ENCODE measurements at regions of chr19 and their contacts with region 1.

Region 1: GRCh38 chr19:3801412-3802096 is 15.4 kb upstream of the MATK start:
- DNase-seq: peak; percentile 64 to 80
- ATAC-seq: peak; percentile 70 to 72 (median 70)
- H3K4me3 ChIP-seq: peak overlapping the region; percentile 10
- H3K4me3 Mint-ChIP-seq: peak overlapping the region; percentile 78
- H3K27ac ChIP-seq: peak overlapping the region; percentile 34
- H3K27ac Mint-ChIP-seq: peak overlapping the region; percentile 68 to 72
- H3K4me1 ChIP-seq: peaks cover 91% of the 10 kb centered on the region
- H3K4me1 Mint-ChIP-seq: peaks cover 34 to 70% of the 10 kb centered on the region in 2 donors
- H3K27me3 ChIP-seq: no peaks in the 10 kb centered on the region
- H3K27me3 Mint-ChIP-seq: no peaks in the 10 kb centered on the region
- CTCF ChIP-seq: no peak

Region 2: DNA sequence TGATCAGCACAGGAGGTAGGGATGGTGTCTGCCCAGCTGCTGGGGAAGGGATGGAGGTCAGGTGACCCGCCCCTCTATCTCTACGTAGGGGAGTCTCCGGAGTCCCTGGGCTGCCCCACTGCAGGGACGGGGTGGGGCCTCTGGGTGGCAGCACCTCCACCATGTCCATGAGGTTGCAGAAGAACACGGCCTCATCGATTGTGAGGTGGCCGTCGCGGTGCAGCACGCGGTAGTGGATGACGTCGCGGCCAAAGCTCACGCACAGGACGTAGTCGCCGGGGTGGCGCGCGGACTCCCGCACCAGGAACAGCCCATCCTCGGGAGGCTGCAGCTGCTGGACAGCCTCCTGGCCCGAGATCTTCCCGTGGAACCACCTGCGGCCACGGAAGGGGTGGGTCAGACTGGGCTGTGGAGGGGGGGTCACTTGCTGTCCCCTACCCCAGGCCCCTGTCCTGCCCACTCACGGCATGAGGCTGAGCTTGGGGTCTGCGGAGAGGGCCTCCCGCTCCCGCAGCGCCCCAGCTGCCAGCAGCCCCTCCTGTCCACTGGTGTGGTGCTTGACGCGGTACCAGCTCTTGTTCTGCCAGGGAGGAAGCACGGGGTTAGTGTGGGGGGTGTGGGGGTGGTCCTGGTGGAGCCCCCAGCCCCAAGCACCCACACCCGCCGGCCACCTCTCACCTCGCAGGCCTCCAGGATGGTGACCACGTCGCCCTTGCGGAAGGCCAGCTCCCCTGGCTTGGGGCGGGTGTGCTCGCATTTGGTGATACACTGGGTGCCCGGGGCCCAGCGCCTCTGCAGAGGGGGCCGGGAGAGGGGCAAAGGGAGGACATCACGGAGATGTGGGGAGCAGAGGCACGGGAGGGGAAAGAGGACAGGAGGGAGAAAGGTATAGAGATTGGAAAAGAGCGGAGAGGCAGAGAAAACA is 17.6 kb before region 1 on chr19:
- intact Hi-C with region 1: loop called (anchors 1 kb)
- DNase-seq: peak; percentile 67 to 70
- ATAC-seq: peak; percentile 66 to 71 (median 70)
- H3K4me3 ChIP-seq: peak overlapping the region; percentile 90
- H3K4me3 Mint-ChIP-seq: peak overlapping the region; percentile 90
- H3K27ac ChIP-seq: peak overlapping the region; percentile 73
- H3K27ac Mint-ChIP-seq: peak overlapping the region; percentile 83 to 93
- H3K4me1 ChIP-seq: peaks cover 61% of the 10 kb centered on the region
- H3K4me1 Mint-ChIP-seq: peaks cover 22 to 44% of the 10 kb centered on the region in 2 donors
- H3K27me3 ChIP-seq: no peaks in the 10 kb centered on the region
- H3K27me3 Mint-ChIP-seq: no peaks in the 10 kb centered on the region
- CTCF ChIP-seq: peak; percentile 72

Region 3: DNA sequence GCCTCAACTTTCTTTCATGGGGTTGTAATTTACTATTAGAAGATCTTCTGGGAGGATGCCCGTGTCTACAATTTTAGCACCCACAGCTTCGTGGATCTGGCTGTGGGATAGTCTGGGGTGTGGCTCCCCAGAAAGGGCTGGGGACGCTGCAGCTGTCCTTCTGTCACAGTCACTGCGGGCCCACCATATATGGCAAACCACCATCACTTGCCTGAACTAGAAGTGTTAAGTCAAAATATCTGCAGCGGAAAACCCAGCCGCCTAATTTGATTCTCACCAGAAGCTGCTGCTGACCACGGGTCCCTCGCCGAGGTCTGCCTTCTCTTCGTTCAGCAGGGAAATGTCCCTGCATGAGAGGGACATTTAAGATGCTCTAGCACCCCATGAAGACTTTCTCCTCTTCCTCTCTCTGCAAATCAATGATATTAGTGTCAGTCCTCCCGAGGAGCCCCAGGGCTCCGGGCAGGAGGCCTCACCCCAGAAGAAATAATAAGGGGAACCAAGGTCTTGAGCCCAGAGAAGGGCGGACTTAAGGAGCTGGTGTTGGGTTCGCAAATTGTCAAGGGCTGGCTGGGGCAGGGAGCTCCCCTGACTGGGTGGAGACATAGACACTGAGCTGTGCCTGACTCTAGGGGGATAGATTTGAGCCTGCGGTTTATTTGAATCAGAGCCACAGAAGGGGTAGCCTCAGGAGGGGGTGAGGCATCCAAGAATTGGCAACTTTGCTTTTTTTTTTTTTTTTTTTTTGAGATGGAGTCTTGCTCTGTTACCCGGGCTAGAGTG is 12.4 kb before region 1 on chr19:
- intact Hi-C with region 1: loop called (anchors 1 kb)
- DNase-seq: peak; percentile 70 to 77
- ATAC-seq: peak; percentile 67 to 82 (median 77)
- H3K4me3 ChIP-seq: peak overlapping the region; percentile 15
- H3K4me3 Mint-ChIP-seq: peak overlapping the region; percentile 88
- H3K27ac ChIP-seq: peak overlapping the region; percentile 84
- H3K27ac Mint-ChIP-seq: peak overlapping the region; percentile 92 to 96
- H3K4me1 ChIP-seq: peaks cover 80% of the 10 kb centered on the region
- H3K4me1 Mint-ChIP-seq: peaks cover 41 to 57% of the 10 kb centered on the region in 2 donors
- H3K27me3 ChIP-seq: no peaks in the 10 kb centered on the region
- H3K27me3 Mint-ChIP-seq: no peaks in the 10 kb centered on the region
- CTCF ChIP-seq: no peak

Region 4: DNA sequence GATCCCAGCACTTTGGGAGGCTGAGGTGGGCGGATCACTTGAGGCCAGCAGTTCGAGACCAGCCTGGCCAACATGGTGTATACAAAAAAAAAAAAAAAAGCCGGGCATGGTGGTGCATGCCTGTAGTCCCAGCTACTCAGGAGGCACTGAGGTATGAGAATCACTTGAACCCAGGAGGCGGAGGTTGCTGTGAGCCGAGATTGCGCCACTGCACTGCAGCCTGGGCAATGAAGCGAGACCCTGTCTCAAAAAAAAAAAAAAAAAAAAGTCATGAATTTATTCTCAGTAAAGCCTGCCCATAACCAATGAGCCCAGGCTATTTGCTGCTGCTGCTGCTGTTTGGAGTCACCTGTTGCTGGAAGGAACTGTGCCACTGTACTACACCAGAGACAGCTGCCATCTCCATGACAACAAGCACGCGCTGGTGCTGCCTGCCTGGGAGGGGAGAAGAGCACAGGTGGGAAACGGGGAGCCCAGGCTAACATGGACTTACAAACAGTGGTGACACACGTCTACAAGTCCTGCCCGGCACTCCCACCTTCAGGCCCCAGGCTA is 56.0 kb after region 1 on chr19:
- intact Hi-C with region 1: no loop called
- DNase-seq: no peak
- ATAC-seq: no peak
- H3K4me3 ChIP-seq: no peak overlapping the region
- H3K4me3 Mint-ChIP-seq: no peak overlapping the region
- H3K27ac ChIP-seq: no peak overlapping the region
- H3K27ac Mint-ChIP-seq: no peak overlapping the region
- H3K4me1 ChIP-seq: no peaks in the 10 kb centered on the region
- H3K4me1 Mint-ChIP-seq: no peaks in the 10 kb centered on the region
- H3K27me3 ChIP-seq: no peaks in the 10 kb centered on the region
- H3K27me3 Mint-ChIP-seq: peaks cover 0 to 2% of the 10 kb centered on the region in 2 donors
- CTCF ChIP-seq: no peak

Measured in natural killer cell (primary cell).